ENCODE measurements at regions of chr17 and their contacts with region 1.

Region 1: GRCh38 chr17:2688351-2689342 is 22.9 kb downstream of the CLUH start:
- DNase-seq: peak in 3 of 10 donors; percentile 17 to 39 (median 26)
- H3K4me3 ChIP-seq: no peak overlapping the region
- H3K27ac ChIP-seq: peak overlapping the region in 41 of 59 donors; percentile 1 to 72 (median 34)
- H3K27me3 ChIP-seq: no peaks in the 10 kb centered on the region
- CTCF ChIP-seq: no peak

Region 2: GRCh38 chr17:2613089-2613808 is 75.4 kb before region 1 on chr17:
- intact Hi-C with region 1: loop called in 1 of 2 experiments (anchors 5 kb)
- DNase-seq: no peak
- H3K4me3 ChIP-seq: no peak overlapping the region
- H3K27ac ChIP-seq: no peak overlapping the region
- H3K27me3 ChIP-seq: no peaks in the 10 kb centered on the region
- CTCF ChIP-seq: no peak

Measured in dorsolateral prefrontal cortex (tissue), 120 donors.